PC-9 (cell line): ENCODE measurements at regions of chr7 and their contacts with region 1.

Region 1: DNA sequence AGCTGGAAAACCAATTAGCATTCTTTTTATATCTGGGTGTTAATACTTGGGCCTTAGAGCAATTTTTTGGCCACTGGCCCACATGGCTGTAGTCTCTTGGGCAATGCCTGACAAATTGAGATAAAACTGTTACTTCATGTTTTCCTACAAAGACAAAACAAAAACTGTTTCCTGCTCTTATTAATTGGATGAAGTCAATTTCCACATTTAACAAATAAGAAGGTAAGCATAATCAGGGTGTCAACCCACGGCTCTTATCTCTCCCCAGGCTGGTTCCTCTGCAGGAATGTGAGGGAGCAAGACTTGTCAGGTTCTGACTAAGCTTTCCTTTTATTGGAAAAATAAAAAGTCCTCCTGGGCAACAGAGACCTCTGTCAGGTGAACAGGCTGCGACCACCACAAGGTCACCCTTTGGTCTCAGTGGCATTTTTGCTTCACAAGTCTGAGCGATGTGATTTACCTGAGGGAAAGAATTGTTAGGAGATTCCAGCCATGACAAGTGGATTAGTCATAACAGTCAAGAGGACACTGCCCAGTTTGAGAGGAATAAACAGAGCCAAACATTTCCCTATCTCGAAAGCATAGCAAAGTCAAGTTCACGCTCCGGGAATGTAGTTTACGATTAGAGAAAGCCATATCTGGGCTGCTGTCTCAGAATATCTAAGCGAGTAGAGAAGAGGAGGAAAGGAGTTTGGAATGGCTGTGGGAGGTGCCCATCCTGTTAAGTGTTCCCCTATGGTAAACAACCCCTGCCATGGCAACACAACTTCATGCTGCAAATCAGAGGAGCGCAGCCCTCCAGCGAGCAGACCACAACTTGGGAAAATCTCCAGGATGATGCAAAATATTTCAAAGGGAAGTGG is 144.4 kb downstream of the TES start:
- DNase-seq: peak; percentile 92 to 100
- H3K4me3 ChIP-seq: peak overlapping the region; percentile 50; the same call in 1 of the 2 replicates
- H3K27ac ChIP-seq: peak overlapping the region; percentile 93
- H3K4me1 ChIP-seq: peaks cover 62% of the 10 kb centered on the region
- H3K27me3 ChIP-seq: no peaks in the 10 kb centered on the region
- CTCF ChIP-seq: no peak

Region 2: GRCh38 chr7:116211006-116211912 is 143.5 kb before region 1 on chr7:
- CTCF ChIA-PET with region 1: no interaction called
- POLR2A ChIA-PET with region 1: no interaction called
- intact Hi-C with region 1: loop called (anchors 1 kb)
- DNase-seq: peak; percentile 92 to 93
- H3K4me3 ChIP-seq: peak overlapping the region; percentile 87
- H3K27ac ChIP-seq: peak overlapping the region; percentile 99
- H3K4me1 ChIP-seq: peaks cover 46% of the 10 kb centered on the region
- H3K27me3 ChIP-seq: no peaks in the 10 kb centered on the region
- CTCF ChIP-seq: no peak

Region 3: GRCh38 chr7:116316833-116317612 is 37.8 kb before region 1 on chr7:
- CTCF ChIA-PET with region 1: no interaction called
- POLR2A ChIA-PET with region 1: interaction called, 4 read pairs
- intact Hi-C with region 1: loop called (anchors 1 kb)
- DNase-seq: peak; percentile 76 to 97
- H3K4me3 ChIP-seq: peak overlapping the region; percentile 29; the same call in 1 of the 2 replicates
- H3K27ac ChIP-seq: peak overlapping the region; percentile 88
- H3K4me1 ChIP-seq: peaks cover 31% of the 10 kb centered on the region
- H3K27me3 ChIP-seq: no peaks in the 10 kb centered on the region
- CTCF ChIP-seq: no peak

Region 4: DNA sequence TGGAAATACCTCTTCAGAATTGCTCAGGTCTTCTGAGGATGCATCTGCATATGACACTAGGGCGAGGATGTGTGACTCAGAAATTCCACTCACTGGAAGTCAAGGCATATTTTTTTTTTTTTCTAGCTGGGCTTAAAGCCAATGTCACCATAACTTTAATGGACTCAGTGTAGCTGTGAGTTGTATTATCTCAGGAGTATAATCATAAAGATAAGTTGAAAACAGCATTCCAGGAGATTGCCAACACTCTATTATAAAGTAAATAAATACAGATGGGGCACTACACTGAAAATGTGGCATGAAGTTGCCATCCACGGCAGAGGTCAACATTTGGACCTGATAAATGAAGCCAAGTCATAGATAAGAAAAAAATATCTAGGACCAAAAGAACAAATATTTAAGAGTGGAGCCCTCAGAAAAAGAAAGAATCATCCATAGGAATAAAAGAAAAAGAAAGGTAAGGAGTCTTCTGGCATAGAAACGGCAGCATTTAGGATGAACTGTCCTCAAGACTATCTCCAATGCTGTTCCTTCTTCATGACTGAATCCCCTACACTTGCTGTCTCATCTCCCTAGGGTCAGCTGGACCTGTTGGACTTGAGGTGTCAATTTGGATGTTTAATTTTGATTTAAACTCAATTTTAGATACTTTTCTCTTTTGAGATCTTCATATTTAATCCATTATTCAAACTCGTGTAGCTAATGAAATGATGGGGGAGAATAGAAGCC is 71.8 kb after region 1 on chr7:
- CTCF ChIA-PET with region 1: no interaction called
- POLR2A ChIA-PET with region 1: no interaction called
- intact Hi-C with region 1: loop called (anchors 1 kb)
- DNase-seq: peak; percentile 56 to 91
- H3K4me3 ChIP-seq: no peak overlapping the region
- H3K27ac ChIP-seq: peak overlapping the region; percentile 59
- H3K4me1 ChIP-seq: peaks cover 26% of the 10 kb centered on the region
- H3K27me3 ChIP-seq: no peaks in the 10 kb centered on the region
- CTCF ChIP-seq: no peak

Region 5: GRCh38 chr7:116461500-116461899 is 106.7 kb after region 1 on chr7:
- CTCF ChIA-PET with region 1: no interaction called
- POLR2A ChIA-PET with region 1: no interaction called
- intact Hi-C with region 1: loop called (anchors 1 kb)
- DNase-seq: no peak
- H3K4me3 ChIP-seq: no peak overlapping the region
- H3K27ac ChIP-seq: no peak overlapping the region
- H3K4me1 ChIP-seq: peaks cover 26% of the 10 kb centered on the region
- H3K27me3 ChIP-seq: no peaks in the 10 kb centered on the region
- CTCF ChIP-seq: no peak

Region 6: DNA sequence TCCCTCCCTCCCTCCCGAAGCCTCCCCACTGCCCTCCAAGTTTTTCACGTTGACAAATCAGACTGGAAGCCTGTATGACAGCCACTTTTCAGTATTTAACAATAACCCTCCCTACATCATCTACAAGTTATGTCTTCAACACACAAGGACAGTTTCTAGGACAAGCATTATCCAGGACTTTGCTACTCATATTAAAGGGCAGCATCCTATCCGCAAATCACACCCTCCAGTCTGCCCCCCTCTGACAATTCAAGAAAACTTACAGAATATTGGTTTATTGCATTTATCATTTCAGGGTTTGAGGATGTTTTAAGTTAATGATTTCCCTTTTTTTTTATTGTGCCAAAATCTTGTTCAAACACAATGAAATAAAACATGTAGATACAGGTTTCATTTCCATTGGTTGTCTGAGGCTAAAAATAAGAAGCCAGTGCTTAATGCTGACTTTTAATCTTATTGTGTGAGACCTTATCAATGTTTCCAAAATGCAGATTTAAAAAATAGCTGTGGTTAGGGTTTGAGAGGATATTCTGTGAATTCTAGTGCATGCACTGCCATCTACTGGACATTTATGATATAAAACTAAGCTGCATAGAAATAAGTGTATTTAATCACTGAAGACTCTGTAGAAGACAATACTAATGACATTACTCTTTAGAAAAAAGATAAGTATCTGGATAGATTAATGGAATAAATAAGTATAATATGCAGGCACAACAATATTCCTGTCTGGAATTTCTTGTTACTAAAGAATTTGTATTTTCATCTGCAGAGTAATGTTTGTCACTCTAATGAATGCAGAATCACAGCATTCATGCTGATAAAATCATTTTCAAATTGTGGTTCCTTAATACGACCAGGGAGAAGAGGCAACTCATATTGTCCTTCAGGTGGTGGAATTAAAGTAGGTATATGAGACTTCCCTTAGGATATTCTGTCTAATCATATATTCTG is 234.1 kb after region 1 on chr7:
- CTCF ChIA-PET with region 1: no interaction called
- POLR2A ChIA-PET with region 1: no interaction called
- intact Hi-C with region 1: loop called (anchors 1 kb)
- DNase-seq: peak in 1 of 2 experiments; percentile 6
- H3K4me3 ChIP-seq: no peak overlapping the region
- H3K27ac ChIP-seq: no peak overlapping the region
- H3K4me1 ChIP-seq: peaks cover 14% of the 10 kb centered on the region
- H3K27me3 ChIP-seq: no peaks in the 10 kb centered on the region
- CTCF ChIP-seq: peak; percentile 94